Naive thymus-derived CD4-positive, alpha-beta T cell (primary cell): ENCODE measurements at regions of chr17 and their contacts with region 1.

Region 1: DNA sequence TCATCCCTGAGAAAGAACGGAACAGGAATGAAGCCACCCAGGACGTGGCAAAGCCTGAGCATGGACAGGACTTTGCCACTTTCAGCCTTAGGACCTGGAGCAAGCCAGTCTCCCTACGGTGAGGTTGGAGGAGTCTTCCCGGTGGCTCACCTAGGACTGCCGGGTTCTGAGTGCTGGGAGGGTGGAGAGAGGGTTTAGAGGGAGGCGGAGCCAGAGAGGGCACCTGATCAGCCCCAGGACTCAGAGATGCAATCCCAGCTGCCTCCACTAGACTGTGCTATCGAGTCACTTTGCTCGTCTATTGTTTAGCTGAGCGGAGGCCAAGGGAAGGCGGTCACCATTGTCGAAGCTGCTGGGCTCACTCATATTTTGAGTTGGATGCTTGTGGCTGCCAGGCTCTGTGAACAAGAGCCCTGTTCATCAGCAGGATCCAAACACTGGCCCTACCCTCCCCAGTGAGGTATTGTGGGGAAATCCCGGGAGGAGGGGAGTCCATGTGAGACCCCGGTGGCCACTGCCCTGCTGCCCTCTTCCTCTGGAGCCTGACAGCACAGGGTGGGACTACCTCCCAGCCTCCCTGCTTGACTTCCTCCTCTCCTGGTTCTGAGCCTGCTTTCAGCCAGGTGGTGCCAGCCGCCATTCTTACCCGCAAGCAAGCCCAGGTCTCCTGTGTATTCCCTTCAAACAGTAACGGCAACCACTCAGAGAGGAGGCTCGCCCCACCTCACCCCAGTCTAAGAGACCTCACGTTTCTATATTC is 7.0 kb downstream of the KRT14 start:
- DNase-seq: peak in 8 of 9 donors; percentile 12 to 71 (median 36)
- ATAC-seq: peak; percentile 90
- H3K4me3 ChIP-seq: no peak overlapping the region
- H3K4me3 Mint-ChIP-seq: no peak overlapping the region
- H3K27ac ChIP-seq: no peak overlapping the region
- H3K27ac Mint-ChIP-seq: no peak overlapping the region
- H3K4me1 ChIP-seq: no peaks in the 10 kb centered on the region
- H3K4me1 Mint-ChIP-seq: peaks cover 0 to 3% (median 0%) of the 10 kb centered on the region in 7 donors
- H3K27me3 ChIP-seq: peaks cover 0 to 4% of the 10 kb centered on the region in 2 donors
- H3K27me3 Mint-ChIP-seq: peaks cover 22 to 52% (median 28%) of the 10 kb centered on the region in 5 donors

Region 2: DNA sequence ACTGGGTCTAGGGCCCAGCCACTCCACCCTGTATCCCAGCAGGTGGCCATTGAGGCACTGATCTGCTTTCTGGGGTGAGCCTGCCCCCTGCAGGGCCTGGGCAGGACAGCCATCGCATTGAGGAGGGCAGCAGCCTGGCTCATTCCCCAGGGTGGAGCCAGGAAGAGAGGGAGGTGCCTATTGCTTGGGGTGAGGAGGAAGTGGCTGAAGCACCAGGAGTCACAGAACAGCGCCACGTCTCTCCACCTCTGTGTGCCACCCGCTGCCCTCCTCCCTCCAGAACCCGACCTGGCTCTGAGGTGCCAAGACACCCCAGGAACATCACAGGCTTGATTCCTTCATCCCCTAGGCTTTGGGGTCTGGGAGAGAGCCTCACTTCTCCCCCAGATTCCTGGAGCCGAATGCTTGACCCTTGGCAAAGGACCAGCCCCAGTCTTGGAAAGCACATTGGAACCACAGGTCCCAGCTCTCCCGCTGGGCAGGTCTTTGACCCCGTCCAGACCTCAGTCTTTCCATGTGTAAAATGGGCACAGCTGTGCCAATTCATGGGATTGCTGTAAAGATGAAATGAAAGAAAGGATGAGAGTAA is 82.8 kb before region 1 on chr17:
- CTCF ChIA-PET with region 1: no interaction called
- POLR2A ChIA-PET with region 1: no interaction called
- intact Hi-C with region 1: loop called in 1 of 2 experiments (anchors 1 kb)
- DNase-seq: peak; percentile 19 to 61 (median 48)
- ATAC-seq: peak; percentile 88
- H3K4me3 ChIP-seq: no peak overlapping the region
- H3K4me3 Mint-ChIP-seq: peak overlapping the region in 3 of 10 donors; percentile 30 to 59 (median 52)
- H3K27ac ChIP-seq: no peak overlapping the region
- H3K27ac Mint-ChIP-seq: peak overlapping the region in 4 of 9 donors; percentile 38 to 72 (median 57)
- H3K4me1 ChIP-seq: peaks cover 0 to 9% of the 10 kb centered on the region in 2 donors
- H3K4me1 Mint-ChIP-seq: peaks cover 21 to 29% (median 23%) of the 10 kb centered on the region in 7 donors
- H3K27me3 ChIP-seq: no peaks in the 10 kb centered on the region
- H3K27me3 Mint-ChIP-seq: peaks cover 0 to 8% (median 0%) of the 10 kb centered on the region in 5 donors

Region 3: GRCh38 chr17:41655611-41656351 is 76.1 kb after region 1 on chr17:
- CTCF ChIA-PET with region 1: no interaction called
- POLR2A ChIA-PET with region 1: no interaction called
- intact Hi-C with region 1: no loop called
- DNase-seq: no peak
- ATAC-seq: no peak
- H3K4me3 ChIP-seq: no peak overlapping the region
- H3K4me3 Mint-ChIP-seq: no peak overlapping the region
- H3K27ac ChIP-seq: no peak overlapping the region
- H3K27ac Mint-ChIP-seq: no peak overlapping the region
- H3K4me1 ChIP-seq: no peaks in the 10 kb centered on the region
- H3K4me1 Mint-ChIP-seq: no peaks in the 10 kb centered on the region
- H3K27me3 ChIP-seq: no peaks in the 10 kb centered on the region
- H3K27me3 Mint-ChIP-seq: no peaks in the 10 kb centered on the region